Kidney (tissue), 22 donors: ENCODE measurements at regions of chr3 and their contacts with region 1.

Region 1: DNA sequence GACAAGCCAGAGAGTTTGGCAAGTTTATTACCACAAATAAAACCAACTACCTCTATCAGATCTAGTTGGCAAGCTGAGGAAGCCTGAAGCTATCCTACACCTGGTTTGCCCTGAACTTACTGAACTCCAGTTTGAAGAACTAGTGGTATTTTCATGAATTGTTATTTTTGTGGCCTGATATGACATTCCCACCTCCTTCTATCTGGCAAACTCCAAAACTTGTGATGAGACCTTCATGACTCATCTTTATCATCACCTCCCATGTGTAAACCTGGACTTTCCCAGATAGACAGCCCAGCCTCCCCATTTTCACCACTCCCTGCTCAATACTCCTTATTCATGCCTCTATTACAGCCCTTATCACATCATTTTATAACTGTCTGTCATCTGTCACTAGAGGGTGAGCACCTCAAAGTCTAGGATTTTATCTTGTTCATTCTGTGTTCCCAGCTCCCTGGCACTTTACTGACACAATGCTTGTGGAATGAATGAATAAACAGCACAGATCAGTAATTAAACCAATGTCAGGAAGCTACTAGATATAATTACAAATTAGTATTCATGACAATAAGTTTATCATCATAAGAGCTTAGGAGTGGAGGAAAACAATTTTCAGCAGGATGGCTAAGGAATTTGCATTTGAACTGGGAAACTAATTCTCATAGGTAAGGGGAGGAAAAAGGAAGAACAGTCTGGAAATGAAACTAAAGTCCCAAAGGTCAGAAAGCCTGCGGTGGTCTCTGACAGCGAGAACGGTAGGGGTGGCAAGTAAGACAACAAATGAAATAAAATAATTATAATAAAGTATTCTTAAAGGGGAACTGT is 13.2 kb upstream of the TRANK1 start:
- DNase-seq: no peak
- H3K4me3 ChIP-seq: no peak overlapping the region
- H3K27ac ChIP-seq: no peak overlapping the region
- H3K4me1 ChIP-seq: no peaks in the 10 kb centered on the region
- H3K27me3 ChIP-seq: no peaks in the 10 kb centered on the region
- CTCF ChIP-seq: no peak

Region 2: GRCh38 chr3:36729204-36730056 is 228.6 kb before region 1 on chr3:
- intact Hi-C with region 1: loop called (anchors 10 kb)
- DNase-seq: peak in 2 of 5 donors; percentile 67 to 80
- H3K4me3 ChIP-seq: no peak overlapping the region
- H3K27ac ChIP-seq: no peak overlapping the region
- H3K4me1 ChIP-seq: no peaks in the 10 kb centered on the region
- H3K27me3 ChIP-seq: no peaks in the 10 kb centered on the region
- CTCF ChIP-seq: peak; percentile 73

Region 3: DNA sequence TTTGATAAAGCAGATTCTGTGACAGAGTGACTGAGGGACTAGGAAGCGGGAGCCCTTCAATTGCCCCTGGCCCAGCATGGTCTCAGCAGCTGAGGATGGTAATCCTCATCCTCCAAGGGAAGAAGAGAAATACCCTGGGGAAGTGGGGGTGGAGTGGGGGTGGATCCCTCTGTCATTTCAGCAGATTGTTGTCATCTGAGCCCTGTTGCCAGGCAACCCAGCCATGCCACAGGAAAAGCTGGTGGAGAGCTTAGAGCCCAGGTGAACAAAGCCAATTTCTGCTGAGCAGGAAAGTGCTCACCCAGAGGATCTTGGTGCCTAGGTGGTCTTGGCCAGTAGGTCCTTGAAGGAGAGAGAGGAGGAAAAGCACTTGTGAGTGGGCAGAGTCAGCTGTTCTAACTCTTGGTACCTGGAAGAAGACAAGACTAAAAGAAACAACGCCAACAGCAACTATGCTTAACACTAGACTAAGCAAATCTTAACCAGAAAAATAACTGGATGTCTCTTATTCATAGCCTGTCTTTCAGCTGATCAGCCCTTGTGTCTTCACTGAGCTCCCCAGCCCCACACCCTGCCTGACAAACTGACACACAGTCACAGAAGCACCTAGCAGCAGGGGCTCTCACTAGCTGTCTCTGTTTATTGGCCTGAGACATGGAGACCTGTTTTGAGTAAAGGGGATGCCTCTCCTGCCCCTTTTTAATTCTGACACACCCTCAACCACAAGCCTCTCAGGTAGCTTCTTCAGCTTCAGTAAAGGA is 153.6 kb before region 1 on chr3:
- intact Hi-C with region 1: no loop called
- DNase-seq: peak in 4 of 5 donors; percentile 48 to 55 (median 52)
- H3K4me3 ChIP-seq: no peak overlapping the region
- H3K27ac ChIP-seq: no peak overlapping the region
- H3K4me1 ChIP-seq: no peaks in the 10 kb centered on the region
- H3K27me3 ChIP-seq: no peaks in the 10 kb centered on the region
- CTCF ChIP-seq: no peak